Natural killer cell (primary cell): ENCODE measurements at regions of chr17 and their contacts with region 1.

Region 1: DNA sequence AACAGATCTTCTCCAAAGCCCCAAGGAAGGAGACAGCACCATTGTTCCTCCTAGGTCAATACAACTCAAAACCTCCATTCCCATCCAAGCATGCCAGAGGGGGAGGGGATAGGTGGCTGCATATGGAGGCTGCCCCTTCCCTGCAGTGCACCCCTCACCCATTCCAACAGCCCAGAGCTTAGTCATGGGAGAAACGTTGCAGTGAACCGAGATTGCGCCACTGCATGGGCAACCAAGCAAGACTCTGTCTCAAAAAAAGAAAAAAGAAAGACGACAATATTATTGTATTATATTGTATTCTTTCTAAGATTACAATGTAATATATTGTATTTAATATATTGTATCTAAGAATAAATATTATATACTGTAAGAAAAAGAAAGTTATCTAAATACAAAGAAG is 36.4 kb upstream of the CD300E start:
- DNase-seq: no peak
- ATAC-seq: no peak
- H3K4me3 ChIP-seq: no peak overlapping the region
- H3K4me3 Mint-ChIP-seq: no peak overlapping the region
- H3K27ac ChIP-seq: no peak overlapping the region
- H3K27ac Mint-ChIP-seq: no peak overlapping the region
- H3K4me1 ChIP-seq: peaks cover 5% of the 10 kb centered on the region
- H3K4me1 Mint-ChIP-seq: peaks cover 6 to 10% of the 10 kb centered on the region in 2 donors
- H3K27me3 ChIP-seq: no peaks in the 10 kb centered on the region
- H3K27me3 Mint-ChIP-seq: peaks cover 7 to 32% of the 10 kb centered on the region in 2 donors
- CTCF ChIP-seq: no peak

Region 2: GRCh38 chr17:74736513-74737298 is 76.8 kb after region 1 on chr17 and contains the start of gene RAB37:
- intact Hi-C with region 1: loop called (anchors 1 kb)
- DNase-seq: peak; percentile 57 to 78
- ATAC-seq: peak; percentile 29 to 69 (median 34)
- H3K4me3 ChIP-seq: peak within 1 kb of the TSS; percentile 90
- H3K4me3 Mint-ChIP-seq: peak within 1 kb of the TSS; percentile 92
- H3K27ac ChIP-seq: peak within 1 kb of the TSS; percentile 66
- H3K27ac Mint-ChIP-seq: peak within 1 kb of the TSS; percentile 90 to 93
- H3K4me1 ChIP-seq: peaks cover 92% of the 10 kb centered on the region
- H3K4me1 Mint-ChIP-seq: peaks cover 34 to 43% of the 10 kb centered on the region in 2 donors
- H3K27me3 ChIP-seq: no peaks in the 10 kb centered on the region
- H3K27me3 Mint-ChIP-seq: peaks cover 0 to 4% of the 10 kb centered on the region in 2 donors
- CTCF ChIP-seq: peak; percentile 56
- total RNA-seq, gene RAB37: 150 to 184 (median 169) TPM

Region 3: DNA sequence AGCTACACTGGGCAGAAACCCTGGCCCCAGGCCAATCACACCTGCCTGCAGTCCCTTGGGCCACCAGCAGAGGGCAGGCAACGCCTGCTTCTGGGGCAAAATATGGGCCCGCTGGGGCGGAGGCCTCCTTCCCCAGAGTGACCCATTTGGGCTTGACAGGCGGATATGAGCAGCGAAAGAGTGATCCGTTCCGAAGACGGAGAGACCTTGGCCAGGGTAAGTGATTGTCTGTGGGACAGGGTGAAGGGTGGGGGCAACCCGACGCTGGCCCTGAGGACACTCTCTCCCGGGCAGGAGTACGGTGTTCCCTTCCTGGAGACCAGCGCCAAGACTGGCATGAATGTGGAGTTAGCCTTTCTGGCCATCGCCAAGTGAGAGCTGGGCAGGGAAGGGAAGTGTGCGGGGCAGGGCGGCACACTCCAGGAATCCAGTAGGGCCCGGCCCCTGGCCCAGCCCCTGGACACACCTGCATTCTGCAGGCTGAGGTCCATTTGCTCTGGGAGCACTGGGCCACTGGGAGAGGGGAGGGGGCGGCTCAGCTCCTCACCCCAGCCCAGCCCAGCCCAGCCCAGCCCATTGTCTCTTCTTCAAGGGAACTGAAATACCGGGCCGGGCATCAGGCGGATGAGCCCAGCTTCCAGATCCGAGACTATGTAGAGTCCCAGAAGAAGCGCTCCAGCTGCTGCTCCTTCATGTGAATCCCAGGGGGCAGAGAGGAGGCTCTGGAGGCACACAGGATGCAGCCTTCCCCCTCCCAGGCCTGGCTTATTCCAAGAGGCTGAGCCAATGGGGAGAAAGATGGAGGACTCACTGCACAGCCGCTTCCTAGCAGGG is 85.0 kb after region 1 on chr17:
- intact Hi-C with region 1: loop called (anchors 2 kb)
- DNase-seq: peak; percentile 88 to 89
- ATAC-seq: peak; percentile 39 to 64 (median 49)
- H3K4me3 ChIP-seq: no peak overlapping the region
- H3K4me3 Mint-ChIP-seq: peak overlapping the region; percentile 80
- H3K27ac ChIP-seq: no peak overlapping the region
- H3K27ac Mint-ChIP-seq: peak overlapping the region; percentile 90 to 93
- H3K4me1 ChIP-seq: peaks cover 79% of the 10 kb centered on the region
- H3K4me1 Mint-ChIP-seq: peaks cover 51 to 70% of the 10 kb centered on the region in 2 donors
- H3K27me3 ChIP-seq: no peaks in the 10 kb centered on the region
- H3K27me3 Mint-ChIP-seq: no peaks in the 10 kb centered on the region
- CTCF ChIP-seq: peak; percentile 100

Region 4: GRCh38 chr17:74770498-74771318 is 110.8 kb after region 1 on chr17:
- intact Hi-C with region 1: loop called (anchors 1 kb)
- DNase-seq: peak; percentile 67 to 87
- ATAC-seq: peak; percentile 86 to 96 (median 95)
- H3K4me3 ChIP-seq: no peak overlapping the region
- H3K4me3 Mint-ChIP-seq: peak overlapping the region; percentile 13
- H3K27ac ChIP-seq: no peak overlapping the region
- H3K27ac Mint-ChIP-seq: peak overlapping the region; percentile 82 to 84
- H3K4me1 ChIP-seq: peaks cover 46% of the 10 kb centered on the region
- H3K4me1 Mint-ChIP-seq: peaks cover 27 to 45% of the 10 kb centered on the region in 2 donors
- H3K27me3 ChIP-seq: no peaks in the 10 kb centered on the region
- H3K27me3 Mint-ChIP-seq: no peaks in the 10 kb centered on the region
- CTCF ChIP-seq: peak; percentile 76

Region 5: GRCh38 chr17:74780443-74781238 is 120.7 kb after region 1 on chr17:
- intact Hi-C with region 1: loop called (anchors 1 kb)
- DNase-seq: peak; percentile 35 to 67
- ATAC-seq: peak; percentile 57 to 61 (median 61)
- H3K4me3 ChIP-seq: no peak overlapping the region
- H3K4me3 Mint-ChIP-seq: peak overlapping the region; percentile 71
- H3K27ac ChIP-seq: peak overlapping the region; percentile 62
- H3K27ac Mint-ChIP-seq: peak overlapping the region; percentile 86 to 92
- H3K4me1 ChIP-seq: peaks cover 56% of the 10 kb centered on the region
- H3K4me1 Mint-ChIP-seq: peaks cover 40 to 46% of the 10 kb centered on the region in 2 donors
- H3K27me3 ChIP-seq: no peaks in the 10 kb centered on the region
- H3K27me3 Mint-ChIP-seq: no peaks in the 10 kb centered on the region
- CTCF ChIP-seq: peak; percentile 69

Region 6: DNA sequence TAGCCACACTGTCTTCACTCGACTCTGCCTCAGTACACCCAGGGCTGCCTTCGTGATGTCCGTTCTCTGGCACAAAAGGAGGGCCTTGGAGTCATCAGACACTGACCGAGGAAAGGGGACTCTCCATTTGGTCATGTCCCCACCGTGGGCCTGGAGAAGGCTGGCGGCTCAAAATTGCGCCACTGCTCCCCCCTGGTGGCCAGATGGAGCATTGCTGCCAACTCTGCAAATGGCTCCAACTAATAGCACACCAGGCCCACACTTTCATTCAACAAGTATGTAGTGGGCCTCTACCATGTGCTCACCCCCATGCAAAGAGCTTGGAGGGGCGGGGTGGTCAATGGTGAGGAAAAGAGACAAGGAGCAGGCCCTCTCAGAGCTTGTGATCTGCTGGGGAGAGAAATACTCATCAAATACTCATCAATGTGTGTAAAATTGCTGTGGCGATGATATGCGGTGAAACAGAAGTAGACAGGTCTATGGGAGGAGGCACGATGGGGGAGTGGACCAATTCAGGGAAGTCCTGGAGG is 205.0 kb after region 1 on chr17:
- intact Hi-C with region 1: loop called (anchors 1 kb)
- DNase-seq: peak; percentile 70 to 84
- ATAC-seq: peak; percentile 74 to 90 (median 76)
- H3K4me3 ChIP-seq: no peak overlapping the region
- H3K4me3 Mint-ChIP-seq: peak overlapping the region; percentile 13
- H3K27ac ChIP-seq: no peak overlapping the region
- H3K27ac Mint-ChIP-seq: no peak overlapping the region
- H3K4me1 ChIP-seq: peaks cover 24% of the 10 kb centered on the region
- H3K4me1 Mint-ChIP-seq: peaks cover 6 to 27% of the 10 kb centered on the region in 2 donors
- H3K27me3 ChIP-seq: peaks cover 19% of the 10 kb centered on the region
- H3K27me3 Mint-ChIP-seq: peaks cover 0 to 23% of the 10 kb centered on the region in 2 donors
- CTCF ChIP-seq: peak; percentile 88